ENCODE measurements at regions of chr1 and their contacts with region 1.

Region 1: DNA sequence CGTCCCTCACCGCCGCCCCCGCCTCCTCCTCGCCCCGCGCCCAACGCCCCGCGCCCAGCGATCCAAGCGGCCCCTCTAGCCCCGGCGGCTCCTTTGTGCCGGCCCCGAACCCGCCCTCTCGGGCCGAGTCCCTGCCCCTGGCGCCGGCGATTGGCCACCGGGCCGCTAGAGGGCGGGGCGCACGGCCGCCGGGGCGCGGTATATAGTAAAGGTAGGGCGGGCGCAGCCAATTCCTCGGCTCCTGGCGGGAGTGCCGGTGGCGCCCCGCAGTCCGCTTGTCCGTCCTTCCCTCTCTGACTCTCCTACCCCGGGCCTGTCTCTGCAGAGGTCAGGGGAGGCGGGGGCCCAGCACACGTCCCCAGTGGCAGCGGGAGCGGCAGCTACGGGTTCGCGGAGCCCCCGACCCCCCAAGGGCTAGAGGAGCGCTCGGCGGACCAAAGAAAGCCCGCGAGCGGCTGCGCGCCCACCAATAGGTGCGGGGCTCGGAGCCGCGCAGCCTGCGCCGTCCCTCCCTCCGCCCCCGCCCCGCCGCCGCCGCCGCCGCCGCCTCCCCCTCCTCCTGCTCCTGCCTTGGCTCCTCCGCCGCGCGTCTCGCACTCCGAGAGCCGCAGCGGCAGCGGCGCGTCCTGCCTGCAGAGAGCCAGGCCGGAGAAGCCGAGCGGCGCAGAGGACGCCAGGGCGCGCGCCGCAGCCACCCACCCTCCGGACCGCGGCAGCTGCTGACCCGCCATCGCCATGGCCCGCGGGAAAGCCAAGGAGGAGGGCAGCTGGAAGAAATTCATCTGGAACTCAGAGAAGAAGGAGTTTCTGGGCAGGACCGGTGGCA is at the start of gene ATP1B1:
- DNase-seq: peak; percentile 64
- ATAC-seq: peak; percentile 86
- H3K4me3 ChIP-seq: peak within 1 kb of the TSS; percentile 72 to 84
- H3K27ac ChIP-seq: peak within 1 kb of the TSS; percentile 85
- H3K4me1 ChIP-seq: peaks cover 50 to 65% of the 10 kb centered on the region in 2 experiments
- H3K27me3 ChIP-seq: no peaks in the 10 kb centered on the region
- CTCF ChIP-seq: 0 out of 6 replicates have a peak, but pooled peaks of 1 of the 3 experiments have one; percentile 16
- POLR2A ChIP-seq: peak; percentile 90
- RAD21 ChIP-seq: no peak
- total RNA-seq, gene ATP1B1: 48.6 TPM

Region 2: DNA sequence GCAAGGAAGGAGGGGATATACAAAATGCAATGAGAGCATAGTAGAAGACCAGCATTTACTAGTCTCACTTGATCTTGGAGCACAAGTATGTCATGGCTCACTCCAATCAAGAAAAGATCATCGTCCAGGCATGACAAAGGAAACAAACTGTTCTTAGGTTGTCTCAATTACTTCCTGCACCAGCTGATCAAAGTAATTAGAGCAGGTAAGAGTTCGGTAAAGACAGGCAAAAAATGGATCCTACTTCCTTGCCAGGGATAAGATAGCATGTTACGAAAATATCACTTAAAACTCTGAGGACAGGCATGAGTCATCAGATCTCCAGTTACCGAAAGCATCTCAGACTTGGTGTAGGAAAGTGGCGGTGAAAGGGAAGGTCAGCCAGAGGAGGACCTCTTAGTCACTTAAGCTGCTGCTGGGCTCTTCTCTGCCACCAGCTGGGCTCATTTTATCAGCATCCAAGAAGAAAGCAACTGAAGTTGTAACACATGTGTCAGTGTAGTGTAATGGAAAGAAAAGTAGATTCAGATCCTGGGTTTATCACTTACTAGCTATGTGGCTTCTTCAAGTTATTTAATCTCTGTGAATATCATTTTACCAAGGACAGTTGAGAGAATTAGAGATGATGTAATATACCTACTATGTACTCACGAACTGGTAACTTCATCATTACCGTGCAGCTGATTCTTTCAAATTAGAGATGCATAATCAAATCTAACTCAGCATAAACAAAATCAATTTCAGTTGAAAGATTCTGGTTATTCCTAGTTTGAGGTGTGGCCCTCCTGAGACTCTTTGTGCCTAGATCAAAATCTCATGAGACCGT is 483.1 kb before region 1 on chr1:
- CTCF ChIA-PET with region 1: no interaction called
- POLR2A ChIA-PET with region 1: no interaction called
- RAD21 ChIA-PET with region 1: no interaction called
- intact Hi-C with region 1: loop called (anchors 5 kb)
- DNase-seq: peak; percentile 72
- ATAC-seq: peak; percentile 97
- H3K4me3 ChIP-seq: peak overlapping the region in 1 of 2 experiments; percentile 32; a peak in 2 of 4 replicates
- H3K27ac ChIP-seq: no peak overlapping the region
- H3K4me1 ChIP-seq: peaks cover 7 to 15% of the 10 kb centered on the region in 2 experiments; a peak in 3 of 4 replicates
- H3K27me3 ChIP-seq: no peaks in the 10 kb centered on the region
- CTCF ChIP-seq: peak in 2 of 3 experiments; percentile 8 to 15; a peak in 1 of 6 replicates
- POLR2A ChIP-seq: no peak
- RAD21 ChIP-seq: peak; percentile 40

Region 3: GRCh38 chr1:169091480-169091941 is 14.8 kb before region 1 on chr1:
- CTCF ChIA-PET with region 1: no interaction called
- POLR2A ChIA-PET with region 1: no interaction called
- RAD21 ChIA-PET with region 1: no interaction called
- intact Hi-C with region 1: no loop called
- DNase-seq: no peak
- ATAC-seq: no peak
- H3K4me3 ChIP-seq: no peak overlapping the region
- H3K27ac ChIP-seq: no peak overlapping the region
- H3K4me1 ChIP-seq: no peaks in the 10 kb centered on the region
- H3K27me3 ChIP-seq: no peaks in the 10 kb centered on the region
- CTCF ChIP-seq: no peak
- POLR2A ChIP-seq: no peak
- RAD21 ChIP-seq: no peak

Region 4: GRCh38 chr1:169161496-169162194 is 55.3 kb after region 1 on chr1:
- CTCF ChIA-PET with region 1: no interaction called
- POLR2A ChIA-PET with region 1: no interaction called
- RAD21 ChIA-PET with region 1: no interaction called
- intact Hi-C with region 1: no loop called
- DNase-seq: peak; percentile 19
- ATAC-seq: peak; percentile 70
- H3K4me3 ChIP-seq: no peak overlapping the region
- H3K27ac ChIP-seq: no peak overlapping the region
- H3K4me1 ChIP-seq: peaks cover 16 to 31% of the 10 kb centered on the region in 2 experiments
- H3K27me3 ChIP-seq: no peaks in the 10 kb centered on the region
- CTCF ChIP-seq: no peak
- POLR2A ChIP-seq: no peak
- RAD21 ChIP-seq: peak; percentile 48; the same call in 1 of the 2 replicates

Region 5: GRCh38 chr1:169367486-169368405 is 261.4 kb after region 1 on chr1 and contains the starts of genes BLZF1 and NME7:
- CTCF ChIA-PET with region 1: no interaction called
- POLR2A ChIA-PET with region 1: interaction called, 3 read pairs
- RAD21 ChIA-PET with region 1: no interaction called
- intact Hi-C with region 1: loop called (anchors 1 kb)
- DNase-seq: peak; percentile 94
- ATAC-seq: peak; percentile 97
- H3K4me3 ChIP-seq: peak within 1 kb of the TSS; percentile 91 to 97
- H3K27ac ChIP-seq: peak within 1 kb of the TSS; percentile 70
- H3K4me1 ChIP-seq: peaks cover 16 to 36% of the 10 kb centered on the region in 2 experiments
- H3K27me3 ChIP-seq: no peaks in the 10 kb centered on the region
- CTCF ChIP-seq: no peak
- POLR2A ChIP-seq: no peak
- RAD21 ChIP-seq: no peak
- total RNA-seq, gene BLZF1: 19.6 TPM
- total RNA-seq, gene NME7: 21.8 TPM